ENCODE measurements at regions of chr20 and their contacts with region 1.

Region 1: GRCh38 chr20:13567663-13568062 is 71.1 kb downstream of the TASP1 start:
- DNase-seq: no peak
- H3K4me3 ChIP-seq: no peak overlapping the region
- H3K27ac ChIP-seq: peak overlapping the region in 1 of 2 donors; percentile 44
- H3K4me1 ChIP-seq: peaks cover 0 to 31% (median 1%) of the 10 kb centered on the region in 4 donors
- H3K27me3 ChIP-seq: no peaks in the 10 kb centered on the region
- CTCF ChIP-seq: no peak

Region 2: DNA sequence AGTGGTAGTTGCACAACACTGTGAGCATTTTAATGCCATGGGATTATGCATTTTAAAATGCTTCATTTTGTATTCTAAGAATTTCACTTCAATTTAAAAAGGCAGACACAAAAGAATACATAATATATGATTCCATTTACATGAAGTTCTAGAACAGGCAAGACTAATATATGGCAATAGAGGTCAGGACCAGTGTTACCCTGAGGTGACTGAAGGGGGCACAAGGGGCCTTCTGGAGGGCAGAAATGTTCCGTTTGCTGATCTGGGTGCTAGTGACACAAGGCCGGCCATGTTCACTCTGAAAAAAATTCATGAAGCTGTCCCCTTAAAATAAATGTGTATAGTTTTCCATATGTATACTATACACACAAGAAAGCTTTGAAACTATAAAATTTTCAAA is 42.5 kb after region 1 on chr20:
- intact Hi-C with region 1: loop called (anchors 10 kb)
- DNase-seq: no peak
- H3K4me3 ChIP-seq: no peak overlapping the region
- H3K27ac ChIP-seq: no peak overlapping the region
- H3K4me1 ChIP-seq: peaks cover 0 to 33% (median 12%) of the 10 kb centered on the region in 4 donors
- H3K27me3 ChIP-seq: no peaks in the 10 kb centered on the region
- CTCF ChIP-seq: no peak

Measured in tibial artery (tissue), 4 donors.